T-cell (primary cell): ENCODE measurements at regions of chr3 and their contacts with region 1.

Region 1: DNA sequence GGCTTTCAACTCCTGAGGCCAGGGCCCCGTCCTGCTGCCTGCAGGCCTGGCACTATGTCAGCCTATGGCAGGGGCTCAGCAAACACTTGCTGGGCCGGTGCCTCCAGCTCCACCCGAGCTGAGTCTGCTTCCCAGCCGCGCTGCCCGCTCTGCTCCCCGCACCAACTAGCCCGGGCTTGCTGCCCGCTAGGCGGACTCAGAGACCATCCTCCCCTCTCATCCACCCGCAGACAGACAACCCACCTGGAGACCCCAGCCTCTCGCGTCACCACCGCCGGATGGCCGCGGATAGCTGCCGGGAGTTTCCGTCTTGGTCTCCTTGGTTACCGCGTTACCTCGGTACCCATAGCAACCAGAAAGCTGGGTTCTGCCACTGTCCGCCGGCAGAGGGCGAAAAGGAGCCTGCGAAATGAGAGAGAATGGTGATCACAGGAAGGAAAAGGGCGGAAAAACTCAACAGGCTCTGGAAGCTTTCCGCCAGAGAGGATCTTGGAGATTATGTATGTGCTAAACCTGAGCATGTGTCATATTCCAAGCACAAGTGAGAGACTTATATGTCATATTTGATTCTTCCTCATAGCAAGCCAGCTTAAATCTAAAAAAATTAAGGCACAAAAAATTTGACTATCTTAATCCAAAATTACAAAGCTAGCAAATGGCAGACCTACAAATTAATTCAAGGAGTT is at the start of gene ZBBX:
- DNase-seq: peak; percentile 59 to 88 (median 76)
- ATAC-seq: peak; percentile 86 to 95 (median 88)
- H3K4me3 ChIP-seq: peak within 1 kb of the TSS; percentile 31 to 58
- H3K4me3 Mint-ChIP-seq: peak within 1 kb of the TSS; percentile 74 to 79 (median 76)
- H3K27ac ChIP-seq: no peak within 1 kb of the TSS
- H3K27ac Mint-ChIP-seq: no peak within 1 kb of the TSS
- H3K4me1 ChIP-seq: peaks cover 3 to 7% of the 10 kb centered on the region in 2 experiments
- H3K4me1 Mint-ChIP-seq: peaks cover 7 to 13% (median 9%) of the 10 kb centered on the region in 3 donors
- H3K27me3 ChIP-seq: peaks cover 0 to 4% of the 10 kb centered on the region in 2 experiments
- H3K27me3 Mint-ChIP-seq: peaks cover 4% of the 10 kb centered on the region in 2 donors
- total RNA-seq, gene ZBBX: not detected

Region 2: DNA sequence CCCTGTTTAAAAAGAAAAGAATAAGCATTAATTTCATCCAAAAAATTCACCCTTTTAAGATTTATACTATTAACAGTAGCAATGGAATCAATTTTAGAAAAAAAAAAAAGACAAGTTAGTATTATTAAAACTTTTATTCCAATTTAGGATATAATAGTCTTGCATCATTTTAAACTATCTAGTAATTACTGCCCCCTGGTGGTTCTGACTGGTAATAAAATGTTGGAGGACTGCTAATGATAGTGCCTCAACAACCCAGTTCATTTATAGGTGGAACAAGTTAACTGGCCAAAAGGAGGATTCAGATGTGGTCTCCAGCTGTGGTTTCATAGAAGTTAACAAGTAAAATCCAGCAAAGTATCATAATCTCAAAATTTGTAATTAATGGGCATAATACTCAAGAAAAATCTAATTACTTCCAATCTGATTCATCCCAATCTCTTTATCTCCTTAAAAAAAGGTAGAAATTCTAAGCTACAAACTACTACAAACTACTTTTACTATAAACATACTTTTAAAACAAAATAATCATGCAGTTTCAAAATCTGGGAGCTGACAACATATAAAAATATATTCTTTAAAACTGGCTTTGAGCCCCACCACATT is 304.3 kb after region 1 on chr3:
- CTCF ChIA-PET with region 1: interaction called, 3 to 12 read pairs
- POLR2A ChIA-PET with region 1: no interaction called
- DNase-seq: peak in 22 of 35 experiments; percentile 1 to 76 (median 26)
- ATAC-seq: peak in 3 of 4 experiments; percentile 64 to 70 (median 68)
- H3K4me3 ChIP-seq: no peak overlapping the region
- H3K4me3 Mint-ChIP-seq: no peak overlapping the region
- H3K27ac ChIP-seq: no peak overlapping the region
- H3K27ac Mint-ChIP-seq: no peak overlapping the region
- H3K4me1 ChIP-seq: no peaks in the 10 kb centered on the region
- H3K4me1 Mint-ChIP-seq: peaks cover 0 to 2% (median 0%) of the 10 kb centered on the region in 3 donors
- H3K27me3 ChIP-seq: no peaks in the 10 kb centered on the region
- H3K27me3 Mint-ChIP-seq: no peaks in the 10 kb centered on the region

Region 3: GRCh38 chr3:167740961-167741587 is 360.9 kb after region 1 on chr3:
- CTCF ChIA-PET with region 1: interaction called, 9 to 10 read pairs
- POLR2A ChIA-PET with region 1: no interaction called
- DNase-seq: peak in 19 of 35 experiments; percentile 3 to 46 (median 12)
- ATAC-seq: peak; percentile 72 to 90 (median 82)
- H3K4me3 ChIP-seq: no peak overlapping the region
- H3K4me3 Mint-ChIP-seq: no peak overlapping the region
- H3K27ac ChIP-seq: no peak overlapping the region
- H3K27ac Mint-ChIP-seq: no peak overlapping the region
- H3K4me1 ChIP-seq: peaks cover 0 to 8% of the 10 kb centered on the region in 2 experiments
- H3K4me1 Mint-ChIP-seq: peaks cover 12 to 17% (median 12%) of the 10 kb centered on the region in 3 donors
- H3K27me3 ChIP-seq: no peaks in the 10 kb centered on the region
- H3K27me3 Mint-ChIP-seq: no peaks in the 10 kb centered on the region

Region 4: GRCh38 chr3:167882067-167882667 is 502.0 kb after region 1 on chr3:
- CTCF ChIA-PET with region 1: interaction called, 15 to 57 read pairs
- POLR2A ChIA-PET with region 1: no interaction called
- DNase-seq: peak in 1 of 35 experiments; percentile 57
- ATAC-seq: peak in 3 of 4 experiments; percentile 27 to 62 (median 32)
- H3K4me3 ChIP-seq: no peak overlapping the region
- H3K4me3 Mint-ChIP-seq: no peak overlapping the region
- H3K27ac ChIP-seq: no peak overlapping the region
- H3K27ac Mint-ChIP-seq: no peak overlapping the region
- H3K4me1 ChIP-seq: no peaks in the 10 kb centered on the region
- H3K4me1 Mint-ChIP-seq: peaks cover 0 to 4% (median 4%) of the 10 kb centered on the region in 3 donors
- H3K27me3 ChIP-seq: peaks cover 0 to 2% of the 10 kb centered on the region in 2 experiments
- H3K27me3 Mint-ChIP-seq: peaks cover 7 to 16% of the 10 kb centered on the region in 2 donors